ENCODE measurements at regions of chr6 and their contacts with region 1.

Region 1: DNA sequence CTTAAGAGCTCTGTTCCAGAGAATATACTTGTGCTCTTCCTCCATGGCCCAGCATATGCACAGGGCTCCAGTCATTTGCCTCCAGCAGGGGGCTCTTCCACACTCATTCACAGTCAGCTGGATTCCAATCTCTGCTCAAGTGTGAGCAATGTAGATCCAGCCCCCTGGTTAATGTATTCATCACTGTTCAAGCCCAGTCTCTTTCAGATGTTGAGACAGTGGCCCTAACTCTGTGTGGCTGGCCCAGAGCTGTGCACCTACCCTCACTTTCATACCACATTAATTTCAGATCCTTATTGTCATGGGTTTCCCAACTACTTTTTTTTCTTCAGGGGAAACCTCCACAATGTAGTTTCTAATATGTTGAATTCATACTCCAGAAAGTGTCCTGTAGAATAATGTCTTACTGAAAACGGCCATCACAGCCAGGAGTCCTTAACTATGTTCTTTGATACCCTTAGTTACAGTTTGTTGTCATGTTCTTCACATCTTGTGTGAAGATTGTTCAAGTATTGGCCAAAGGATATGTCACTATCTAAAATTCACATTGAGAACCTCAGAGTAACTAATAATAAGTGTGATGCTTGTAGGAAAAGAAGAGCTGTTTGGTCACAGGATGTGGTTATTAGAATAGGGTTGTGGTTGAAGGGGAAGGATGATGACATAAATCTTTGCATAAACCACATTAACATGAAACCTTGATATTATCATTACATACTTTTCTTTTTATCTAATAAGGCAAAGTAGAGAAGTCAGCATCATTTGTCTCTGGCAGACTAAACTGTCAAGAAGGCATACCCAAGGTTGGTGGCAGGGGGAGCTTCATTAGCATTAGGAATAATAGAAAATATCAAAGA is 14.4 kb upstream of the HLA-DQA1 start:
- DNase-seq: peak; percentile 63
- ATAC-seq: peak; percentile 80
- H3K4me3 Mint-ChIP-seq: peak overlapping the region; percentile 64
- H3K27ac Mint-ChIP-seq: peak overlapping the region; percentile 98
- H3K4me1 Mint-ChIP-seq: peaks cover 50% of the 10 kb centered on the region
- H3K27me3 Mint-ChIP-seq: no peaks in the 10 kb centered on the region

Region 2: GRCh38 chr6:32666420-32667300 is 43.9 kb after region 1 on chr6 and contains the start of gene HLA-DQB1:
- CTCF ChIA-PET with region 1: interaction called, 14 read pairs
- POLR2A ChIA-PET with region 1: no interaction called
- DNase-seq: peak; percentile 74
- ATAC-seq: peak; percentile 86
- H3K4me3 Mint-ChIP-seq: peak within 1 kb of the TSS; percentile 75
- H3K27ac Mint-ChIP-seq: peak within 1 kb of the TSS; percentile 47
- H3K4me1 Mint-ChIP-seq: peaks cover 35% of the 10 kb centered on the region
- H3K27me3 Mint-ChIP-seq: peaks cover 37% of the 10 kb centered on the region
- total RNA-seq, gene HLA-DQB1: 13.4 to 15.1 TPM

Region 3: DNA sequence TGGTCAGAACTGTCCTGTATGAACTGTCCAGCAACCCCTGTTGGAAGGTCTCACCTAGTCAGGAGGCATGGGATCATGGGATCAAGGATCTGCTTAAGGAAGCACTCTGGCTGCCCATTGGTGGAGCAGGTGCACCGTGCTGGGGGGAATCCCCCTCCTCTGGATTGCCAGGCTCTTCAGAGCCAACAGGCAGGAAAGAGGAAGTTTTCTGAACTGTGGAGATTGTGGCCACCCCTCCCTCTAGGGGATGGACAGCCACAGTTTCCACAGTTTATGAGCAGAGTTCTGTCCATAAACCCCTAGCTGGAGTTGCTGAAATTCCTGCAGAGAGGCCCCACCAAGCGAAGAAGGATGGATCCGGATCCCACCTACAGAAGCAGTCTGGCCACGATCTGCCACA is 56.7 kb after region 1 on chr6:
- CTCF ChIA-PET with region 1: no interaction called
- POLR2A ChIA-PET with region 1: no interaction called
- DNase-seq: no peak
- ATAC-seq: no peak
- H3K4me3 Mint-ChIP-seq: no peak overlapping the region
- H3K27ac Mint-ChIP-seq: no peak overlapping the region
- H3K4me1 Mint-ChIP-seq: peaks cover 10% of the 10 kb centered on the region
- H3K27me3 Mint-ChIP-seq: peaks cover 32% of the 10 kb centered on the region

Region 4: DNA sequence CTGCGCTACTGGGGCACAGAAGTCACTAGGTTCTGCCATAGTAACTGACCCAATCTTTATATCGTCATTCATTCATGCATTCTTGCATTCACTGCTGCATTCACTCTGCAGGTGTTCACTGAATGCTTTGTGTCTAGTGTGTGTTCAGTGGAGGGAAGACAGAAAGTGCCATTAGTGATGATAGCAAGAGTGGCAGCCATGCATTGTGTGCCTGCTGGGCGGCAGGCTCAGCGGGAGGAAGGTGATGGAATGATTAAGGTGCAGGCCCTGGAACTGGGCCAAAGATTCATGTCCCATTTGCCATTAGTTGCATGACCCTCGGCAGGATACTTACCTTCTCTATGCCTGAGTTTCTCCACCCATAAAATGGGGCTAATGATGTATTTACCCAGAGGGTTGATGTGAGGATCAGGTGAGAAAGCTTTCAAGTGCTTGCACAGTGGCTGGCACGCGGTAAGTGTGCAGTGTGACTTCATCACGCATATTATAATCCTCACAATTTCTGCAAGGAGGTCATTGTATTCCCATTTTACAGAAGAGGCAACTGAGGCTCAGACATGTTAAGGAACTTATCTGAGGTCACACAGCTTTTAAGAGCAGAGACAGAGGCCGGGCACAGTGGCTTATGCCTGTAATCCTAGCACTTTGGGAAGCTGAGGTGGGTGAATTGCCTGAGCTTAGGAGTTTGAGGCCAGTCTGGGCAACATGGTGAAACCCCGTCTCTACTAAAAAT is 1038.5 kb after region 1 on chr6:
- CTCF ChIA-PET with region 1: no interaction called
- POLR2A ChIA-PET with region 1: no interaction called
- DNase-seq: no peak
- ATAC-seq: no peak
- H3K4me3 Mint-ChIP-seq: no peak overlapping the region
- H3K27ac Mint-ChIP-seq: no peak overlapping the region
- H3K4me1 Mint-ChIP-seq: peaks cover 4% of the 10 kb centered on the region
- H3K27me3 Mint-ChIP-seq: no peaks in the 10 kb centered on the region

Measured in activated CD8-positive, alpha-beta T cell treated with anti-CD3 and anti-CD28 coated beads, Interleukin-2, amount 10 ng/mL, durations not matched to agents 7 days and 5 days (primary cell).